ENCODE measurements at regions of chr1 and their contacts with region 1.

Region 1: GRCh38 chr1:225881969-225882693 is at the start of gene TMEM63A:
- DNase-seq: peak; percentile 82
- H3K4me3 Mint-ChIP-seq: peak within 1 kb of the TSS; percentile 84
- H3K27ac Mint-ChIP-seq: peak within 1 kb of the TSS; percentile 71
- H3K4me1 Mint-ChIP-seq: peaks cover 40% of the 10 kb centered on the region
- H3K27me3 Mint-ChIP-seq: peaks cover 14% of the 10 kb centered on the region
- total RNA-seq, gene TMEM63A: 32.5 and 33.5 TPM in 2 replicates

Region 2: GRCh38 chr1:225777583-225778336 is 104.4 kb before region 1 on chr1 and contains the start of gene SRP9:
- intact Hi-C with region 1: loop called (anchors 2 kb)
- DNase-seq: peak; percentile 99
- H3K4me3 Mint-ChIP-seq: no peak within 1 kb of the TSS
- H3K27ac Mint-ChIP-seq: no peak within 1 kb of the TSS
- H3K4me1 Mint-ChIP-seq: peaks cover 15% of the 10 kb centered on the region
- H3K27me3 Mint-ChIP-seq: no peaks in the 10 kb centered on the region
- total RNA-seq, gene SRP9: 255 and 270 TPM in 2 replicates

Region 3: DNA sequence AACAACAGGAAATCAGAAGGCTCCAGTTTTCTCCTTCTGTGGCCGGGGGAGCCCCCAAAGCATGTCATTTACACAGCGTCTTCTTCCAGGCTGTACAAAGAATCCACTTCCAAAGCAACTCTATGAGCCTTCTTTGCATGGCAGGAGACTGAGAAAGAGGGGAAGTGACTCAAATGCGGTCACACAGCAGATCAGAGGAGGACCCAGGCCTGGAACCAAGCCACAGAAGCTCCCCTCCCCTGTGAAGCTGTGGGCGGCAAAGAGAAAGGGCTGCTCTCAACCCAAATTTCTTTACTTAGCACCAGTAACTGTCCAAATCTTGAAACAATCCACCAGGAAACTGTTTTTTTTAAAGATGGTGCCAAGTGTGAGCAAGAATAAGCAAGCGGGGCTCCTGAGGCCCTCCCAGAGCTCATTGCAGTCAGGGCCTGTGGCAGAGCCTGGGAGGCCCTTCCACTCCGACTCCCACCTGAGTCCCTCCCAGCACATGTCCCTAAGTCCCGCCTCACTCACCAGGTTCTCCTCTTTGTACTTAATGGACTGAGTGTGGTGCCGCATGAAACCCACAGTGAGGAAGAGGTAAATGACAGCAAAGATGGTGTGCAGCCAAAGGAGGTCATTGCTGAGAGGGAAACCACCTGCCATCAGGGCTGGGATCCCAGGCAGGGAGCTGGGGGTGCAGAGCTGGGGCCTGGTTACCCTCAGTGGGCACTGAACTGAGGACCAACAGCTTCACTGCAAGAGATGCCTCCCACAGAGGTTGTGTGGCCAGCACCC is 15.9 kb before region 1 on chr1:
- intact Hi-C with region 1: loop called (anchors 1 kb)
- DNase-seq: peak; percentile 58
- H3K4me3 Mint-ChIP-seq: peak overlapping the region; percentile 55
- H3K27ac Mint-ChIP-seq: no peak overlapping the region
- H3K4me1 Mint-ChIP-seq: peaks cover 26% of the 10 kb centered on the region
- H3K27me3 Mint-ChIP-seq: no peaks in the 10 kb centered on the region

Region 4: GRCh38 chr1:225896937-225897549 is 14.9 kb after region 1 on chr1:
- intact Hi-C with region 1: loop called (anchors 1 kb)
- DNase-seq: peak; percentile 75
- H3K4me3 Mint-ChIP-seq: peak overlapping the region; percentile 52
- H3K27ac Mint-ChIP-seq: peak overlapping the region; percentile 56
- H3K4me1 Mint-ChIP-seq: peaks cover 31% of the 10 kb centered on the region
- H3K27me3 Mint-ChIP-seq: peaks cover 13% of the 10 kb centered on the region

Region 5: DNA sequence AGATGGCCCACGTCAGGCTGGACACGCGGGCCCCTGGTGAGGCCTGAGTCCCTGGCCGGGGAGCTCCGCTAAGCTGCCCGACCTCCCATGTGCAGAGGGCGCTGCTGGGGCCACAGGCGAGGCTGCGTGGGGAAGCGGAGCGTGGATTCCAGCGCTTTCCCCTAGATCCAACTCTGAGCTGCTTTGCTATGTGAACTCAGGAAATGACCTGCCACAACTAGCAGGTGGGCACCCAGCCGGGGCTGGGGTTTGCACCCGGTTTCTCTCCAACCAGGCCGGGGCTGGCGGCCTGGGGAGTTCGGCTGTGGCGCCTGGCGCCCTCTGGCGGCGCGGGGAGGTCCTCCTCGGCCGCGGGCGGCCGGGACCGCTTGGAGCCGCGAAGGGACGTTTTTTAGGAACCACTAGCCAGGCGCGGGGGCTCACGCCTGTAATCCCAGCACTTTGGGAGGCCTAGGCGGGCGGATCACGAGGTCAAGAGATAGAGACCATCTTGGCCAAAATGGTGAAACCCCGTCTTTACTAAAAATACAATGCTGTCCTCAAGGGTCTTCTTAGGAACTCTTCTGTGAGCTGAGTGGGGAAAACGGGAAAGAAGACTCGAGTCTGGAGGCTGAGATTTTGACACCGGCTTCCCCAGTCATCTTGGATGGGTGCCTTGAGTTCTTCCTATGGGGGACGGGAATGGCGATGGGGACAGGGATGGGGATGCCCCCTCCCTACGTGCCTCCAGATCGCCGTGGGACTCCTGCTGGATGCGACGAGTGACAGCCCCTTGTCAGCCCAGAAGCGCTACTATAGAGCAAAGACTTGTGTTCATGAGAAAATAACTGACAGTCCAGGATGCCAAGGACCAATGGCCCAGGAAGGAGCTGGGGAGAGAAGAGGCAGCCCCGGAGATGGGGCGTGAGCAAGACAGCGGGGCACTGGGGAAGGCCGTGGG is 29.3 kb after region 1 on chr1:
- intact Hi-C with region 1: loop called (anchors 1 kb)
- DNase-seq: peak; percentile 62
- H3K4me3 Mint-ChIP-seq: no peak overlapping the region
- H3K27ac Mint-ChIP-seq: no peak overlapping the region
- H3K4me1 Mint-ChIP-seq: peaks cover 5% of the 10 kb centered on the region
- H3K27me3 Mint-ChIP-seq: peaks cover 6% of the 10 kb centered on the region

Region 6: GRCh38 chr1:225923692-225924555 is 41.8 kb after region 1 on chr1 and contains the start of gene PYCR2:
- intact Hi-C with region 1: loop called (anchors 2 kb)
- DNase-seq: peak; percentile 94
- H3K4me3 Mint-ChIP-seq: peak within 1 kb of the TSS; percentile 92
- H3K27ac Mint-ChIP-seq: peak within 1 kb of the TSS; percentile 91
- H3K4me1 Mint-ChIP-seq: peaks cover 43% of the 10 kb centered on the region
- H3K27me3 Mint-ChIP-seq: no peaks in the 10 kb centered on the region
- total RNA-seq, gene PYCR2: 117 and 121 TPM in 2 replicates

Region 7: DNA sequence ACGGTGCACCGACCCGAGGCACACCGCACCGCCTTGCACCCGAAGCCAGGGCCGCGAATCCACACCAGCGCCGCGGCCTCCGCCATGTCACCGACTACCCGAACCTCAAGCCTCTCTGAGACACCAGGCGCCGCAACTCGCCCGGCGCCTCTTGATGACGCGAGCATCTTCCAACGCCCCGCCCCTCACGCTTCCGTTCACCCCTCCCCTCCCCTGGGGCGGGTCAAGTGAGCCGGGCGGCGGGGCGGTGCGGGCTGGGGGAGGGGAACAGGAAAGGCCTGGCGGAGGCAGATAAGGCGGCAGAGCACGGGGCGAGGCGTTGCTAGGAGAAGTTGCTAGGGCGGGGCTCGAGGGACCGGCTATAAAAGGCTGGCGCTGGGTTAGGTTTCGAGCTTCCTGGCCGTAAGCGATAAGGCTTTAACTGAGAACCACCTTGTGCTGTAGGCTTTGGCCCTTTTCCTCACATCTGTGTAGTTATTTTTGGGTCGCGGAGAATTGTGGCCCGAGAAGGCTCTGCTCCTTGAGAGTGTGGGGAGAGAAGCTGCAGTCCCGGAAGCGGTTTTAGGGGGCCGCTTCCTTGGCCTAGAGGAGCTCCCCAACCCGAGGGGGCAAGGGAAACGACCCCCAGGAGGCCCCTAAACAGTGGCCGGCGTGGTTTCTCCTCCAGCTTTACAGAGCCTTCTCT is 117.2 kb after region 1 on chr1 and contains the start of gene SDE2:
- intact Hi-C with region 1: loop called (anchors 5 kb)
- DNase-seq: peak; percentile 100
- H3K4me3 Mint-ChIP-seq: peak within 1 kb of the TSS; percentile 100
- H3K27ac Mint-ChIP-seq: peak within 1 kb of the TSS; percentile 99
- H3K4me1 Mint-ChIP-seq: peaks cover 55% of the 10 kb centered on the region
- H3K27me3 Mint-ChIP-seq: no peaks in the 10 kb centered on the region
- total RNA-seq, gene SDE2: 22.0 and 22.3 TPM in 2 replicates